ENCODE measurements at regions of chr11 and their contacts with region 1.

Region 1: GRCh38 chr11:48184446-48184845 is 32.2 kb upstream of the OR4B1 start:
- DNase-seq: no peak
- H3K4me3 ChIP-seq: no peak overlapping the region
- H3K27ac ChIP-seq: no peak overlapping the region
- H3K4me1 ChIP-seq: no peaks in the 10 kb centered on the region
- H3K27me3 ChIP-seq: no peaks in the 10 kb centered on the region
- CTCF ChIP-seq: no peak

Region 2: DNA sequence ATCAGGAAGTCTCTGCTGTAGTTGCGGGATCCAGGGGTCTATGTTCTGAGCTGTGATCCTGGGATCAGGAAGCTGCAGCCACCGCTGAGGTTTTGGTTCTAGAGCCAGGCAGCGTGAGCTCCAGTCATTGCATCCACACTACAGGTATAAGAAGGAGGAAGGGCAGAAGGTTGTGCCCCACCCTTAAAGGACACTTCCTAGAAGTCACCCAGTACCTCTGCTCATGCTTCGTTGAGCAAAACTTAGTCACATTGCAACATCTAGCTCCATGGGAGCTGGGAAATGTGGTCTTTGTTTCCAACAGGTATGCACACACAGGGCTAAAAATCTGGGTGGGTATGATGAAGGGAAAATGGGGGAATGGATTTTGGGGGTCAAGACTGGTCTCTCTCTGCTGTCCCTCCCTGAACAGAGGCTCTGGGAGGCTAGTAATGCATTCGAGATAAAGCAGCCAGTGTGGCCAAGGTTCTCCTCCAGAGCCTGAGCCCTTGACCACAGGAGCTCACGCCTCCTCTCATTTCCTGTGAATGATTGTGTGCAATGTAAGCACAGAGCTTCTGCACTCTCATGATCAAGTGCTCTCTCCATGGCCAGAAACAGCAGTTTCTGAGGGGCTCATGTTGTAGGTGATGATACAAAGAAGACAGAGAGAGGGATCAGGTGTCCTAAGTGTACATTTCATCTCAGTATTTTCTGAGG is 54.6 kb before region 1 on chr11:
- CTCF ChIA-PET with region 1: no interaction called
- dilution Hi-C with region 1: no loop called
- in situ Hi-C with region 1: loop called in 1 of 2 experiments (anchors 10 kb)
- intact Hi-C with region 1: no loop called
- DNase-seq: no peak
- H3K4me3 ChIP-seq: no peak overlapping the region
- H3K27ac ChIP-seq: no peak overlapping the region
- H3K4me1 ChIP-seq: no peaks in the 10 kb centered on the region
- H3K27me3 ChIP-seq: no peaks in the 10 kb centered on the region
- CTCF ChIP-seq: no peak

Region 3: GRCh38 chr11:48216510-48216909 is 32.1 kb after region 1 on chr11 and contains the start of gene OR4B1:
- CTCF ChIA-PET with region 1: no interaction called
- dilution Hi-C with region 1: no loop called
- in situ Hi-C with region 1: no loop called
- intact Hi-C with region 1: no loop called
- DNase-seq: no peak
- H3K4me3 ChIP-seq: no peak within 1 kb of the TSS
- H3K27ac ChIP-seq: no peak within 1 kb of the TSS
- H3K4me1 ChIP-seq: no peaks in the 10 kb centered on the region
- H3K27me3 ChIP-seq: no peaks in the 10 kb centered on the region
- CTCF ChIP-seq: no peak
- total RNA-seq, gene OR4B1: not detected

Measured in mammary epithelial cell (primary cell).